Activated CD4-positive, alpha-beta memory T cell treated with anti-CD3 and anti-CD28 coated beads, Interleukin-2, amount 10 ng/mL, durations not matched to agents 7 days and 5 days (primary cell): ENCODE measurements at regions of chr2 and their contacts with region 1.

Region 1: DNA sequence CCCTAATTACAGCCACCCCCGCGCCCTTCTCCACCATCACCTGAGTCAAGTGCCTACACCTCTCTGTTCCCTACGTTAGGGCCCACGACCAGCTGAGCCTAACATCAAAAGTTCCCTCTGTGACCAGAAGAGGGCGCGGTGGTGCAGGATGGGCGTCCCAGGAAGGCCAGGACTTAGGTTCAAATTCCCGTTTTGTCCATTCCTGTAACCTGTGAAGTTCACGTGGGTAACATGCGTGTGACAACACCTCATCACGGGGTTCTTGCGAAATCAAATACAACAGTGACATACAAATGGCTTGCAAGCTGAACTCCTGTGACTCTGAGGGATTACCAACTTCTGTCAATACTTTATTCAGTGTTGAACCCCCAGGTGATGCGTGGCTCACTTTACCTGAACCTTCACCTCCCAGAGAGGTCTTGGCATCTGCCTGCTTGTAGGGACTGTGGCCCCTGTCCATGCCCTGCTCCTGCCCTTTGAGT is 207.9 kb downstream of the ARL4C start:
- DNase-seq: peak; percentile 83
- H3K4me3 Mint-ChIP-seq: peak overlapping the region; percentile 47
- H3K27ac Mint-ChIP-seq: peak overlapping the region; percentile 100
- H3K4me1 Mint-ChIP-seq: peaks cover 83% of the 10 kb centered on the region
- H3K27me3 Mint-ChIP-seq: no peaks in the 10 kb centered on the region

Region 2: GRCh38 chr2:234014427-234014826 is 274.6 kb before region 1 on chr2:
- CTCF ChIA-PET with region 1: no interaction called
- POLR2A ChIA-PET with region 1: no interaction called
- DNase-seq: no peak
- H3K4me3 Mint-ChIP-seq: no peak overlapping the region
- H3K27ac Mint-ChIP-seq: no peak overlapping the region
- H3K4me1 Mint-ChIP-seq: no peaks in the 10 kb centered on the region
- H3K27me3 Mint-ChIP-seq: peaks cover 23% of the 10 kb centered on the region

Region 3: GRCh38 chr2:234135720-234136221 is 153.2 kb before region 1 on chr2:
- CTCF ChIA-PET with region 1: interaction called, 27 read pairs
- POLR2A ChIA-PET with region 1: interaction called, 8 read pairs
- DNase-seq: peak; percentile 67
- H3K4me3 Mint-ChIP-seq: no peak overlapping the region
- H3K27ac Mint-ChIP-seq: peak overlapping the region; percentile 38
- H3K4me1 Mint-ChIP-seq: peaks cover 22% of the 10 kb centered on the region
- H3K27me3 Mint-ChIP-seq: peaks cover 11% of the 10 kb centered on the region

Region 4: DNA sequence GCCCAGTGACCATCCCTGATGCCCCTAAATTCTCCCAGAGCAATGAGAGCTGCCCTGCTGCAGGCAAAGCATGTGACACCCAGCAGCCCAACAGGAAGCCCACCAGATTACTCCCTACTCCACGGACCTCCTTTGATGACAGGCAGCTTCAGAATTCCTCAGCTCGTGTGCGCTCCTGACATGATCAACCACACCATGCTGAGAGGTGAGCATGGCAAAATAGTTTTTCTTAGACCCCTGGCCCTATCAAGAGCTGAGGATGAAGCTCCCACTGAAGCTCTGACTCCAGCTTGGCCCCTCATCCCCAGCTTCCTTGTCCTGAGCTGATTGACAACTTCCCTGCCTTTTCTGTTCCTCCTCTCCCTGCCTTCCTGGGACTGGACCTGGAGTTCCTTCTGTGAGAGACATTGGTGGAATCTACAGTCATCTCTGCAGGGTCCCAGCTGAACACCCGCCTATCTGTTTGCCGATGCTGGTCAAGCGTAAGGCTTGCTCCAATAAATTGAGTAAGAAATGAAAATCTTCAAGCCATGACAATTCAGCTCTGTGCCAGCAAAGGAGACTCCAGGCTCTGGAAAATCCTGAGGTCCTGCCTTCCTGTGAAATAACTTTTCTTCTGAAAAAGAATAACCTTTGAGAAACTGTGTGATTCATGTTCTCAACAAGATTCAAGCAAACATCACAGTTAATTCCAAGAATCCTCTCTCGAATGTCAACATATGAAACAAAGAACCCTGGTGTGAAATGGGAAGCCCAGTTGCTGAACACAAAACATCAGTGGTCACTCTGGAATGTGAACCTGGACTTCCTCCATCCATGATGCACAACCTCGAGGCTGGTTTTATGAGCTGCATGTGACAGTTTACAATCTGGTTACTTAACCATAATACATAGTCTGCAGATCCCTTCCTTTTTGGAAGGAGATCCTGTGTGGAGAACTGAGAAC is 37.4 kb before region 1 on chr2:
- CTCF ChIA-PET with region 1: no interaction called
- POLR2A ChIA-PET with region 1: no interaction called
- DNase-seq: no peak
- H3K4me3 Mint-ChIP-seq: no peak overlapping the region
- H3K27ac Mint-ChIP-seq: no peak overlapping the region
- H3K4me1 Mint-ChIP-seq: peaks cover 4% of the 10 kb centered on the region
- H3K27me3 Mint-ChIP-seq: peaks cover 4% of the 10 kb centered on the region

Region 5: DNA sequence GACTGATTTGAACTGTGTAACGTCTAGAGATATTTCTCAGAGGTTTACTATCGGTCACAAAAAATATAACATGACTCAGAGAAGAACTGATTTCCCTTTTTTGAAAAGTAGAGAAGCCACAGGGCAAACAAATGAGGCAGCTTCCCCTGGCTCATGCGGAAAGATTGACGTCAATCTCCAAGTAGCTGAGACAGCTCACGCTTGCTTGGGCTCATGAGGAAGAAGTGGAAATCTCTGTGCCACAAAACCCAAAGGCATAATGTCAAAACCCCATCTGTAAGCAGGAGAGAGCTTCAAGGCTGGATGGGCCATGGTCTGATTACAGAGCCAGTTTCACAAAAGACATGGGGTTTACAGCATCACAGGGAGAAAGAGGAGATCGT is 19.8 kb after region 1 on chr2:
- CTCF ChIA-PET with region 1: interaction called, 33 read pairs
- POLR2A ChIA-PET with region 1: interaction called, 120 read pairs
- DNase-seq: peak; percentile 83
- H3K4me3 Mint-ChIP-seq: peak overlapping the region; percentile 29
- H3K27ac Mint-ChIP-seq: peak overlapping the region; percentile 97
- H3K4me1 Mint-ChIP-seq: peaks cover 64% of the 10 kb centered on the region
- H3K27me3 Mint-ChIP-seq: no peaks in the 10 kb centered on the region

Region 6: DNA sequence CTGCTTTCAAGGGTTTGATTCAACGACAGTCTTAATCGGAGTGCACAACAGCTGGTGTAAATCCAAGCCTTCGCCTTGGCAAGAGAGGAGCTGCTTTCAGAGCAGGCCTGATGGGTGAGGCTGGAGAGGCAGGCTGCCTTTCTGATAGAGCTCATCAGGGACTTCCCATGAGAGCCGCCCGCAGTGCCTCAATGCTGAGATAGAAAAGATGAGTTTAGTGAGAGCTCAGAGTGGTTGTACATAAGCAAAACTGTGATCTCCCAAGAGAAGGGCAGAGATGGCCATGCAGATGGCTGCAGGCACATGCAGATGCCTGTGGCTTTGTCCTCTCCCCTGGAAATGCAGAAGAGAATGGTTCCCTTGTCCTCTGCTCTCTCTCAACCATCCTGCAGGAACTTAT is 85.7 kb after region 1 on chr2:
- CTCF ChIA-PET with region 1: interaction called, 17 read pairs
- POLR2A ChIA-PET with region 1: interaction called, 16 read pairs
- DNase-seq: no peak
- H3K4me3 Mint-ChIP-seq: no peak overlapping the region
- H3K27ac Mint-ChIP-seq: no peak overlapping the region
- H3K4me1 Mint-ChIP-seq: peaks cover 49% of the 10 kb centered on the region
- H3K27me3 Mint-ChIP-seq: no peaks in the 10 kb centered on the region

Region 7: DNA sequence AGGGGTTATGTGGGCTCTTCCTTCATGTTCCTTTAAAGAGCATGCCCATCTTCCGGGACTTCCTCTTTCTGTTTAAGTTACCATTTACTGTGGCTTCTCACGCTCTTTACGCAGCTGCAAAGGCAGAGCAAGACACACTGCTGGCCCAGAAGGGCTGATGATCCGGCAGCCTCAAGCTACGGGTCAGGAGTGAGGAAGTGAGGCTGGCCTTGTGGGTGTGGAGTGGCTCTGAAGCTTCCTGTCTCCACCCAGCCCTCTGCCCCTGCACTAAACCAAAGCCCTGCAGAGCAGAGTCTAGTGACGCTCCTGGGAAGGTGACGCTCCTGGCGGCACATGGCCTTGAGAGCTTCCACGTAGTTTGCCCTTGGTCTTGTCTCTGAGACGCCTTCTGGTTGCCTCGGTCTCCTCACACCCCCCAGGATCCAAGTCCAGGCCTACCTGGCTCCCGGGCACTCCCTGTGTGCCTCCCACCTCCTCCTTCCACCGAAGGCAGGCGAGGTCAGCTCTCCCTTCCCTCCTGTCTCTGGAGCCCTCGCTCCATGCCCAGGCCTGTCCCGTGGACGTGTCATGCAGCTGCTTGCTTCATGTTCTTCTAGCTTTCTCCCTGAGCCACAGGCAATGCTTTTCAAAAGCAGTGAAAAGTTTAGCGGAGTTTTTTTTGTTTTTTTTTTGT is 157.5 kb after region 1 on chr2:
- CTCF ChIA-PET with region 1: interaction called, 79 read pairs
- POLR2A ChIA-PET with region 1: interaction called, 196 read pairs
- DNase-seq: peak; percentile 93
- H3K4me3 Mint-ChIP-seq: peak overlapping the region; percentile 55
- H3K27ac Mint-ChIP-seq: peak overlapping the region; percentile 99
- H3K4me1 Mint-ChIP-seq: peaks cover 82% of the 10 kb centered on the region
- H3K27me3 Mint-ChIP-seq: no peaks in the 10 kb centered on the region

Region 8: GRCh38 chr2:234478121-234478858 is 189.3 kb after region 1 on chr2:
- CTCF ChIA-PET with region 1: interaction called, 12 read pairs
- POLR2A ChIA-PET with region 1: interaction called, 325 read pairs
- DNase-seq: no peak
- H3K4me3 Mint-ChIP-seq: no peak overlapping the region
- H3K27ac Mint-ChIP-seq: peak overlapping the region; percentile 80
- H3K4me1 Mint-ChIP-seq: peaks cover 74% of the 10 kb centered on the region
- H3K27me3 Mint-ChIP-seq: no peaks in the 10 kb centered on the region